ENCODE measurements at regions of chr6 and their contacts with region 1.

Region 1: GRCh38 chr6:140285471-140285870 is 911.0 kb upstream of the CITED2 start:
- DNase-seq: peak; percentile 63
- H3K4me3 ChIP-seq: no peak overlapping the region
- H3K27ac ChIP-seq: peak overlapping the region; percentile 91
- H3K4me1 ChIP-seq: peaks cover 36% of the 10 kb centered on the region
- H3K27me3 ChIP-seq: no peaks in the 10 kb centered on the region
- CTCF ChIP-seq: no peak

Region 2: DNA sequence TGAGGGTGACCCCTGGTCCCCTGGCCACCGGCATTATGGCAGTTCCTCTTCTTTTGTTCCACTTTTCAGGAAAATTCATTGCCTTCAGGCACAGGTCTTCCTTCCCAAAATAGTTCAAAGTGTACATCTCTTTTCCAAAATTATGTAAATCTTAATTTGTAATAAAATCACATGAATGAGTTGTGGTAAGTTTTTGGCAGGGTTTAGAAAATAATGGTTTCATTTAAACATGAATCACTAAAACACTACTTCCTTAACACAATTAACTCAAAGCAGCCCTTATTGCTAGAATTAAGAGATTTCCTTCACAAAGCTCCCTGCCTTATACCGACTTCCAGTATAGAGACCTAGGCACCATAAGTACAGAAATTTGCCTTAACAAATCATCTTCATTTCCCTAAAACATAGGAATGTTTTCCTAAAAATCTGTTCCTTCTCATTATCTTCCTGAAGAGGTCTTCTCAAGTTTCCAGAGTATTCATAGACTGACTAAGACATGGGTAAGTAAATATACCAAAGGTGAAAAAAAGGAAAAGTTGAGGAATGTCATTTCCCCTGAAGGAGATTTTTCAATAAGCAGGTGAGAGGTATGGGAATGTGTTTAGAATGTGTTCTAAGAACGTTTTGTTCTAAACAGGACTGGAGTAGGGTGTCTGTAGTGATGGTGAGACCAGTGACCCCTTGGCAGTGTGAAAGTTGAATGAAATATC is 762.8 kb before region 1 on chr6:
- CTCF ChIA-PET with region 1: interaction called, 3 read pairs
- POLR2A ChIA-PET with region 1: no interaction called
- intact Hi-C with region 1: loop called (anchors 2 kb)
- DNase-seq: peak; percentile 52
- H3K4me3 ChIP-seq: no peak overlapping the region
- H3K27ac ChIP-seq: peak overlapping the region; percentile 94
- H3K4me1 ChIP-seq: peaks cover 35% of the 10 kb centered on the region
- H3K27me3 ChIP-seq: no peaks in the 10 kb centered on the region
- CTCF ChIP-seq: no peak

Region 3: GRCh38 chr6:140052756-140053729 is 232.4 kb before region 1 on chr6:
- CTCF ChIA-PET with region 1: interaction called, 10 read pairs
- POLR2A ChIA-PET with region 1: no interaction called
- intact Hi-C with region 1: no loop called
- DNase-seq: peak; percentile 79
- H3K4me3 ChIP-seq: no peak overlapping the region
- H3K27ac ChIP-seq: peak overlapping the region; percentile 98
- H3K4me1 ChIP-seq: peaks cover 50% of the 10 kb centered on the region
- H3K27me3 ChIP-seq: no peaks in the 10 kb centered on the region
- CTCF ChIP-seq: peak; percentile 71

Region 4: DNA sequence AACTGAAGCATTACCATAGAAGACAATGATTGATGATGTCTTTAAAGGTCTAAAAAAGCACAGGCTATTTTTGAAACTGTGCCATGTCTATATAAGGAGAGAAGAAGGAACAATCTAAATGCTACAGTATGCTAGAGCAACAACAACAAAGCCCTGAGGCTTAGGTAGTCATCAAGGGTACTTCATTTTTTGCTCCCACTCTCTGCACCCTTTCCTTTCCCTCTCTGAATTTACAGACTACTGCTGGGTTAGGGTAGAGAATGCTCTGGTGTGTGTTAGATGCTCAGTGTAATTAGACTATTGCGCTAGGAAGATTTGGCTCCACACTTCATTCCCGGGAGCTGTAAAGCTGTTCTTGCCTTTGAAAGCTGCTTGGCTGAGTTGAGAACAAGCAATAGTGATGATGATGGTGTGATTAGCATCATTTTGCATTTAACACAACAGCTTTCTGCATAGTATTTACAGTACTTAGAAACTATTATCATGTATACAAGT is 351.5 kb after region 1 on chr6:
- CTCF ChIA-PET with region 1: no interaction called
- POLR2A ChIA-PET with region 1: no interaction called
- intact Hi-C with region 1: loop called (anchors 2 kb)
- DNase-seq: no peak
- H3K4me3 ChIP-seq: peak overlapping the region; percentile 18
- H3K27ac ChIP-seq: peak overlapping the region; percentile 87
- H3K4me1 ChIP-seq: peaks cover 19% of the 10 kb centered on the region
- H3K27me3 ChIP-seq: no peaks in the 10 kb centered on the region
- CTCF ChIP-seq: no peak

Region 5: DNA sequence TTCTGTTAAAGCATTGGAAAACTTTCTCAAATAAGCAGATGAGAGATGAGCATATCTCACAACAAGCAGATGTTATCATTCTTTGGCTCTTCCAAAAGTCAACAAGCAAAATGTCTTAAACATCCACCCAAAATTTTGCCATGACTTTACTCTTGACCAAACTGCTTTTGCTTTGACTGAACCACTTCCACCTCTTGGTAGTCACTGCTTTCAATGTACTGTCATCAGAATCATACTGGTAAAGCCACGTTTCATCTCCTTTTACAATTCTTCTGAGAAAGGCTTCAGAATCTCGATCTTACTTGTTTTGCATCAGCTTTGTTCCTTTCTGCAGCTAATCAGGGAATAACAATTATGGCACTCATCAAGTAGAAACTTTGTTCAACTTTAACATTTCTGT is 1348.8 kb after region 1 on chr6:
- CTCF ChIA-PET with region 1: no interaction called
- POLR2A ChIA-PET with region 1: no interaction called
- intact Hi-C with region 1: loop called (anchors 1 kb)
- DNase-seq: no peak
- H3K4me3 ChIP-seq: no peak overlapping the region
- H3K27ac ChIP-seq: peak overlapping the region; percentile 100
- H3K4me1 ChIP-seq: peaks cover 48% of the 10 kb centered on the region
- H3K27me3 ChIP-seq: no peaks in the 10 kb centered on the region
- CTCF ChIP-seq: no peak

Measured in A673 (cell line).